Endothelial cell of umbilical vein (primary cell): ENCODE measurements at regions of chr16 and their contacts with region 1.

Region 1: DNA sequence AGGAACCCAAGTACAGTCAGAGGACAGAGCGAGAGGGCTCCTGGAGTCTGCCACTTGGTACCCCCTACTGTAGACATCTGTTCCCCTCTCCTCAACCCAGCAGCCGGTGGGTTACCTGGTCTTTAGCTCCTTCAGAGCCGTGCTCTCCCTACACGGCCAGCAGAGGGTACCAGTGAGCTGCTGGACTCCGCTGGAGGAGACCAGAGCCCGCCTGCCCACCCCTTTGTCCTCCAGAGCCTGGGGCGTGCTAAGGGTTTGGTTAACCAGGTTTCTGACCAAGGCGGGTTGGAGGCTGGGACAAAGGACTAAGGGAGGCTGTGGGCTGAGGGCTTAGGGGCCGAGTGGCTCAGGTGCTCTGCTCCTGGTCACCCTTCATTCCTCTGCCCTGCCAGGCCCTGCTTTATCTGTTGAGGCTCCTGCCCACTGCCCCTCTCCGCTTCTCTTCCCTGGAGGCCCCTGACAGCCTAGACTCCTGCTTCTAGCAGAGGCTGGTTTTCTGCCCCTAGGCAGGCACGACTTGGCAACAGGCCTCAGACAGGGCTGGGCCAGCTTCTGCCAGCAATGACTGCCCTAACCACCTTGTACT is 2.7 kb upstream of the HSD11B2 start:
- DNase-seq: peak; percentile 54
- H3K4me3 ChIP-seq: no peak overlapping the region
- H3K27ac ChIP-seq: no peak overlapping the region
- H3K4me1 ChIP-seq: peaks cover 8% of the 10 kb centered on the region
- H3K27me3 ChIP-seq: peaks cover 36 to 43% of the 10 kb centered on the region in 2 experiments
- CTCF ChIP-seq: peak; percentile 82 to 94
- POLR2A ChIP-seq: no peak

Region 2: GRCh38 chr16:67399181-67399733 is 29.0 kb before region 1 on chr16:
- CTCF ChIA-PET with region 1: interaction called, 12 read pairs
- POLR2A ChIA-PET with region 1: no interaction called
- dilution Hi-C with region 1: no loop called
- intact Hi-C with region 1: no loop called
- DNase-seq: peak; percentile 47
- H3K4me3 ChIP-seq: no peak overlapping the region
- H3K27ac ChIP-seq: no peak overlapping the region
- H3K4me1 ChIP-seq: peaks cover 1% of the 10 kb centered on the region
- H3K27me3 ChIP-seq: peaks cover 5 to 6% of the 10 kb centered on the region in 2 experiments
- CTCF ChIP-seq: peak; percentile 88 to 96
- POLR2A ChIP-seq: no peak

Region 3: GRCh38 chr16:67415872-67416793 is 12.1 kb before region 1 on chr16 and contains the start of gene ZDHHC1:
- CTCF ChIA-PET with region 1: interaction called, 19 read pairs
- POLR2A ChIA-PET with region 1: no interaction called
- dilution Hi-C with region 1: no loop called
- intact Hi-C with region 1: no loop called
- DNase-seq: peak; percentile 72
- H3K4me3 ChIP-seq: peak within 1 kb of the TSS; percentile 76 to 84 (median 82)
- H3K27ac ChIP-seq: peak within 1 kb of the TSS; percentile 81
- H3K4me1 ChIP-seq: peaks cover 13% of the 10 kb centered on the region
- H3K27me3 ChIP-seq: no peaks in the 10 kb centered on the region
- CTCF ChIP-seq: peak; percentile 36 to 48
- POLR2A ChIP-seq: no peak
- total RNA-seq, gene ZDHHC1: 12.9 and 14.4 TPM in 2 replicates

Region 4: DNA sequence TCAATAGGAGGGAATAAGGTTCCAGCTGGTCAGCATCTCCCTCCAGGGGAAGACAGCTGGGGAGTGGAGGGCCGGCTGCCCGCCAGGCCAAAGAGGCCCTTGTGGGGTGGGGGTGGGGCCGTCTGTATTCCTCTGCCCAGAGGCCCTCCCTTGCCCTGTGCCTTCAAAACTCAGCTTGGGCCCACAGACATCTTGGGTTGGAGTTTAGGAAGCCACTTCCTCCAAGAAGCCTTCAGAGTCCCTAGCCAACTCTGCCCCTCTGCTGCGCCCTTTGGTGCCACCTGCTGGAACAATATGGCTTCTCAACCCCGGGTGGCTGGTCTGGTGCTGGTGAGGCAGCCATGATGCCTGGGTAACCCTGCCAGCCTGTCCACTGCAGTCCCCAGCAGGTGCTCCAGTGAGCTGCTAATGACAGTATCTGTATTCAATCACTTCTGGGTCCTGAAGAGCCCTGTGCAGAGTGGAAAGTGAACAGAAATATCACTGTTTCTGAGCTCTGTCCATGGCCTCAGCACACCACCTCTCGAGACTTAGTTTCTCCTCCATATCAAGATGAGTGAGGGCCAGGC is 19.4 kb after region 1 on chr16:
- CTCF ChIA-PET with region 1: interaction called, 57 read pairs
- POLR2A ChIA-PET with region 1: interaction called, 3 read pairs
- dilution Hi-C with region 1: no loop called
- intact Hi-C with region 1: loop called (anchors 1 kb)
- DNase-seq: peak; percentile 41
- H3K4me3 ChIP-seq: no peak overlapping the region
- H3K27ac ChIP-seq: no peak overlapping the region
- H3K4me1 ChIP-seq: no peaks in the 10 kb centered on the region
- H3K27me3 ChIP-seq: no peaks in the 10 kb centered on the region
- CTCF ChIP-seq: peak; percentile 63 to 66
- POLR2A ChIP-seq: no peak

Region 5: GRCh38 chr16:67464565-67464964 is 36.3 kb after region 1 on chr16:
- CTCF ChIA-PET with region 1: interaction called, 201 read pairs
- POLR2A ChIA-PET with region 1: no interaction called
- dilution Hi-C with region 1: no loop called
- intact Hi-C with region 1: loop called (anchors 1 kb)
- DNase-seq: no peak
- H3K4me3 ChIP-seq: no peak overlapping the region
- H3K27ac ChIP-seq: no peak overlapping the region
- H3K4me1 ChIP-seq: peaks cover 9% of the 10 kb centered on the region
- H3K27me3 ChIP-seq: no peaks in the 10 kb centered on the region
- CTCF ChIP-seq: no peak
- POLR2A ChIP-seq: no peak

Region 6: DNA sequence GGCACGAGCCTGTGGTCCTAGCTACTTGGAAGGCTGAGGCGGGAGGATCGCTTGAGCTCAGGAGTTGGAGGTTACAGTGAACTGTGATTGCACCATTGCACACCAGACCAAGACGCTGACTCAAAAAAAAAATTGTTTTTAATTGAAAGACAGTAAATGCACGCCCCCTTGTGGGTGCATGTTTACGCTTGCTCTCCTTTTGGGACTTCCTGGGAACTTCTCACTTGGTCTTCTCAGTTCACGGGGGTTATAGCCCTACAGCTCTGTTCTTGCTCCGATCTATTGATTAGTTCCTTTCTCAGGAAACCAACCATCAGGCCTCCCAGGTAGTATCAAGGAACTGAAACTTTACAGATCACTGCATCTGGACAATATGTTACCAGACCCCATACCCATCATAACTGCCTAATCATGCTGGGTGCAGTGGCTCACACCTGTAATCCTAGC is 86.2 kb after region 1 on chr16:
- CTCF ChIA-PET with region 1: interaction called, 28 read pairs
- POLR2A ChIA-PET with region 1: no interaction called
- dilution Hi-C with region 1: no loop called
- intact Hi-C with region 1: loop called (anchors 2 kb)
- DNase-seq: peak; percentile 66
- H3K4me3 ChIP-seq: no peak overlapping the region
- H3K27ac ChIP-seq: no peak overlapping the region
- H3K4me1 ChIP-seq: peaks cover 13% of the 10 kb centered on the region
- H3K27me3 ChIP-seq: no peaks in the 10 kb centered on the region
- CTCF ChIP-seq: peak; percentile 58 to 68
- POLR2A ChIP-seq: no peak

Region 7: GRCh38 chr16:67987460-67988160 is 559.4 kb after region 1 on chr16:
- CTCF ChIA-PET with region 1: no interaction called
- POLR2A ChIA-PET with region 1: no interaction called
- dilution Hi-C with region 1: no loop called
- intact Hi-C with region 1: no loop called
- DNase-seq: peak; percentile 33
- H3K4me3 ChIP-seq: no peak overlapping the region
- H3K27ac ChIP-seq: no peak overlapping the region
- H3K4me1 ChIP-seq: peaks cover 17% of the 10 kb centered on the region
- H3K27me3 ChIP-seq: no peaks in the 10 kb centered on the region
- CTCF ChIP-seq: no peak
- POLR2A ChIP-seq: no peak